Caco-2 (cell line): ENCODE measurements at regions of chr7 and their contacts with region 1.

Region 1: GRCh38 chr7:99504603-99505323 is at the start of gene ZKSCAN5:
- DNase-seq: peak; percentile 96 to 99
- H3K4me3 ChIP-seq: peak within 1 kb of the TSS; percentile 68
- H3K4me3 Mint-ChIP-seq: peak within 1 kb of the TSS; percentile 85
- H3K27ac Mint-ChIP-seq: peak within 1 kb of the TSS; percentile 91
- H3K4me1 ChIP-seq: no peaks in the 10 kb centered on the region; the same call in 1 of the 2 replicates
- H3K4me1 Mint-ChIP-seq: peaks cover 6% of the 10 kb centered on the region
- H3K27me3 ChIP-seq: no peaks in the 10 kb centered on the region
- H3K27me3 Mint-ChIP-seq: no peaks in the 10 kb centered on the region
- CTCF ChIP-seq: no peak
- total RNA-seq, gene ZKSCAN5: 12.4 and 13.3 TPM in 2 replicates

Region 2: DNA sequence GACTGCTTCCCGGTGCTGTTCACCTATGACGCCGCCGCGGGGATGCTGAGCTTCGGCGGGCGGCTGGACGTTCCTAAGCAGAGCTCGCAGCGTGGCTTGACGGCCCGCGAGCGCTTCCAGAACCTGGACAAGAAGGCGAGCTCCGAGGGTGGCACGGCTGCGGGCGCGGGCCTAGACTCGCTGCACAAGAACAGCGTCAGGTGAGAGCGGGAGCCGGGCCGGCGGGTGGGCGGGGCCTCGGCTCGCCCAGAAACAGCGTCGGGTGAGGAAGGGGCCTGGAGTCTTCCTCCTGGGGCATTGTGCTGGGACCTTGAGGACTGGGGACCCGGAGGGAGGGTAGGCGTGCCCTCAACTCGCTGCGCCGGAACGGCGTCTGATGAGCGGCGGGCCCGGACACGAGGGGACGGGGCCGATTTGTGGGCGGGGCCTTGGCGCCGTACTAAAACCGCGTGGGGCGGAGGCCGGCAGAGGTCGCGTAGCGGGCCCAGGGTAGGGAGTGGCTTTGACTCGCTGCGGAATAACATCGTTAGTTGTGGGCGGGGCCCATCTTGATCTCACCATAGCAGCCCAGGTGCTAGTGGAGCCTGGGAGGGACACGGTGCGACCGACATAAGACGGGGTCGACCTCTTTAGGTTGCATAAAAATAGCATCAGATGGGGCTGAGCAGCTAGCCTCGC is 111.9 kb before region 1 on chr7:
- CTCF ChIA-PET with region 1: no interaction called
- POLR2A ChIA-PET with region 1: no interaction called
- intact Hi-C with region 1: no loop called
- DNase-seq: no peak
- H3K4me3 ChIP-seq: no peak overlapping the region
- H3K4me3 Mint-ChIP-seq: no peak overlapping the region
- H3K27ac Mint-ChIP-seq: no peak overlapping the region
- H3K4me1 ChIP-seq: no peaks in the 10 kb centered on the region
- H3K4me1 Mint-ChIP-seq: peaks cover under 1% of the 10 kb centered on the region
- H3K27me3 ChIP-seq: no peaks in the 10 kb centered on the region
- H3K27me3 Mint-ChIP-seq: no peaks in the 10 kb centered on the region
- CTCF ChIP-seq: no peak

Region 3: GRCh38 chr7:99472561-99473243 is 32.1 kb before region 1 on chr7 and contains the start of gene ZNF789:
- CTCF ChIA-PET with region 1: interaction called, 3 read pairs
- POLR2A ChIA-PET with region 1: interaction called, 4 read pairs
- intact Hi-C with region 1: loop called (anchors 1 kb)
- DNase-seq: peak; percentile 97 to 98
- H3K4me3 ChIP-seq: peak within 1 kb of the TSS; percentile 94
- H3K4me3 Mint-ChIP-seq: peak within 1 kb of the TSS; percentile 82
- H3K27ac Mint-ChIP-seq: peak within 1 kb of the TSS; percentile 78
- H3K4me1 ChIP-seq: no peaks in the 10 kb centered on the region
- H3K4me1 Mint-ChIP-seq: no peaks in the 10 kb centered on the region
- H3K27me3 ChIP-seq: no peaks in the 10 kb centered on the region
- H3K27me3 Mint-ChIP-seq: no peaks in the 10 kb centered on the region
- CTCF ChIP-seq: no peak
- total RNA-seq, gene ZNF789: 30.1 and 32.3 TPM in 2 replicates

Region 4: DNA sequence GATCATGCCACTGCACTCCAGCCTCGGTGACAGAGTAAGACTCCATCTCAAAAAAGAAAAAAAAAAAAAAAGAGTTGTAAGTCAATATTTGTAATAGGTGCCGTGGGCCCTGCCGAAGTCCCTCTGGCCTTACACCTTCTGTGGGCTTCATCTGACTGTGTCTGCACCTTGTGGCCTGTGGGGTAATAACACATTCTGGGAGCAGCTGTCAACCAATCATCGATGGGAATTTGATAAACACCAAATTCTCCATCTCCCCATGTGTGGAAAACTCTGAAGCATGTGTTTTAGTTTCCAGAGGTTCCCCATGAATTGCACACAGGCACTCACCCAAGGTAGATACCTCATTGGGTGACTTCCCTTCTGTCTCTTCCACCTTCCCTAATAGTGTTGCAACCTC is 15.5 kb before region 1 on chr7:
- CTCF ChIA-PET with region 1: interaction called, 3 read pairs
- POLR2A ChIA-PET with region 1: interaction called, 11 read pairs
- intact Hi-C with region 1: no loop called
- DNase-seq: peak; percentile 61 to 63
- H3K4me3 ChIP-seq: no peak overlapping the region
- H3K4me3 Mint-ChIP-seq: no peak overlapping the region
- H3K27ac Mint-ChIP-seq: no peak overlapping the region
- H3K4me1 ChIP-seq: no peaks in the 10 kb centered on the region
- H3K4me1 Mint-ChIP-seq: no peaks in the 10 kb centered on the region
- H3K27me3 ChIP-seq: no peaks in the 10 kb centered on the region
- H3K27me3 Mint-ChIP-seq: no peaks in the 10 kb centered on the region
- CTCF ChIP-seq: peak in 1 of 2 experiments; percentile 33

Region 5: GRCh38 chr7:99551767-99552463 is 47.2 kb after region 1 on chr7 and contains the start of gene FAM200A:
- CTCF ChIA-PET with region 1: no interaction called
- POLR2A ChIA-PET with region 1: interaction called, 4 read pairs
- intact Hi-C with region 1: loop called (anchors 1 kb)
- DNase-seq: peak; percentile 85 to 87
- H3K4me3 ChIP-seq: peak within 1 kb of the TSS; percentile 62
- H3K4me3 Mint-ChIP-seq: peak within 1 kb of the TSS; percentile 83
- H3K27ac Mint-ChIP-seq: peak within 1 kb of the TSS; percentile 84
- H3K4me1 ChIP-seq: no peaks in the 10 kb centered on the region
- H3K4me1 Mint-ChIP-seq: peaks cover 7% of the 10 kb centered on the region
- H3K27me3 ChIP-seq: no peaks in the 10 kb centered on the region
- H3K27me3 Mint-ChIP-seq: no peaks in the 10 kb centered on the region
- CTCF ChIP-seq: no peak
- total RNA-seq, gene FAM200A: 5.2 TPM in 2 replicates

Region 6: GRCh38 chr7:99616359-99617191 is 111.8 kb after region 1 on chr7 and contains the start of gene ZSCAN25:
- CTCF ChIA-PET with region 1: no interaction called
- POLR2A ChIA-PET with region 1: interaction called, 12 read pairs
- intact Hi-C with region 1: no loop called
- DNase-seq: peak; percentile 95 to 96
- H3K4me3 ChIP-seq: peak within 1 kb of the TSS; percentile 69
- H3K4me3 Mint-ChIP-seq: peak within 1 kb of the TSS; percentile 94
- H3K27ac Mint-ChIP-seq: peak within 1 kb of the TSS; percentile 97
- H3K4me1 ChIP-seq: no peaks in the 10 kb centered on the region; the same call in 1 of the 2 replicates
- H3K4me1 Mint-ChIP-seq: peaks cover 21% of the 10 kb centered on the region
- H3K27me3 ChIP-seq: no peaks in the 10 kb centered on the region
- H3K27me3 Mint-ChIP-seq: no peaks in the 10 kb centered on the region
- CTCF ChIP-seq: peak; percentile 35 to 76
- total RNA-seq, gene ZSCAN25: 21.2 and 22.3 TPM in 2 replicates

Region 7: GRCh38 chr7:99693427-99694200 is 188.9 kb after region 1 on chr7:
- CTCF ChIA-PET with region 1: no interaction called
- POLR2A ChIA-PET with region 1: no interaction called
- intact Hi-C with region 1: loop called (anchors 10 kb)
- DNase-seq: peak; percentile 80 to 91
- H3K4me3 ChIP-seq: peak overlapping the region; percentile 24; the same call in 1 of the 2 replicates
- H3K4me3 Mint-ChIP-seq: peak overlapping the region; percentile 59
- H3K27ac Mint-ChIP-seq: peak overlapping the region; percentile 87
- H3K4me1 ChIP-seq: peaks cover 38% of the 10 kb centered on the region
- H3K4me1 Mint-ChIP-seq: peaks cover 33% of the 10 kb centered on the region
- H3K27me3 ChIP-seq: no peaks in the 10 kb centered on the region
- H3K27me3 Mint-ChIP-seq: no peaks in the 10 kb centered on the region
- CTCF ChIP-seq: no peak